CD8-positive, alpha-beta T cell (primary cell): ENCODE measurements at regions of chr3 and their contacts with region 1.

Region 1: GRCh38 chr3:160565442-160566403 is at the start of gene KPNA4:
- DNase-seq: peak; percentile 94 to 98 (median 96)
- ATAC-seq: peak; percentile 88
- H3K4me3 ChIP-seq: peak within 1 kb of the TSS; percentile 97 to 98
- H3K4me3 Mint-ChIP-seq: peak within 1 kb of the TSS; percentile 99
- H3K27ac ChIP-seq: peak within 1 kb of the TSS; percentile 81 to 93
- H3K27ac Mint-ChIP-seq: peak within 1 kb of the TSS; percentile 97
- H3K4me1 ChIP-seq: peaks cover 40% of the 10 kb centered on the region
- H3K4me1 Mint-ChIP-seq: peaks cover 52% of the 10 kb centered on the region
- H3K27me3 ChIP-seq: no peaks in the 10 kb centered on the region
- H3K27me3 Mint-ChIP-seq: no peaks in the 10 kb centered on the region
- CTCF ChIP-seq: no peak
- total RNA-seq, gene KPNA4: 64.4 to 69.2 TPM

Region 2: DNA sequence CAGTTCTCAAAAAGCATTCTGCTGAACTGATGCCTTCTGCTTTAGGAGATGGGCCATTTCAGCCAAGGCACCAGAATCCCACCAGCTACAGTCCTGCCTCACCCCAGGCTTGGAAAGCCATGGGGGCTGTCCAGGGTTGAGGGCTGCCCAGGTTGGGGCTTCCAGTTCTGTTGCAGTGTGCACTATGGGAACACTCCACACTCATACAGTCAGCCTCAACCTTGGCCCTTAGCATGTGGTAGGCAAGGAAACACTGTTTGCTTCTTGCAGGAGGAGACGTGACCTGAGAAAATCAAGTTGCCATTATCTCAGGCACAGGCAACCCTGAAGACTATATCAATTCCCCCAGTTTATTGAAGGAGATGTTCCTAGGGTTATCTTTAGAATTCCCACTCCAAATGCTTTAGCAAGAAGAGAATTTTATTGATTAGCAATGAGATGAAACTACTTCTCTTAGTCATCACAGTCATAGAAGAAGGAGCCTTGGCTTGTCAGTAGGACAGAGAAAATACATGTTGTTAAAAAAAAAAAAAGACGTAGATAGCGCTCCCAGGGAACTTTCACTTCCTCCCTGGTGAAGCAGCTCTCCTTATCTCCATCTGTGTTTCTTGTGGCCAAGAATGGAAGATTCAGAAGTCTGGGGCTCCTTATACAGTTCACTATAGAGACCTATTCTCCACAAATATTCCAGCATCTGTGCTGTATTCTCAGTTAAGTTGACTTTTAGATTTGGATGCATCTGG is 615.4 kb before region 1 on chr3:
- CTCF ChIA-PET with region 1: no interaction called
- POLR2A ChIA-PET with region 1: no interaction called
- intact Hi-C with region 1: no loop called
- DNase-seq: no peak
- ATAC-seq: no peak
- H3K4me3 ChIP-seq: no peak overlapping the region
- H3K4me3 Mint-ChIP-seq: no peak overlapping the region
- H3K27ac ChIP-seq: no peak overlapping the region
- H3K27ac Mint-ChIP-seq: no peak overlapping the region
- H3K4me1 ChIP-seq: no peaks in the 10 kb centered on the region
- H3K4me1 Mint-ChIP-seq: no peaks in the 10 kb centered on the region
- H3K27me3 ChIP-seq: no peaks in the 10 kb centered on the region
- H3K27me3 Mint-ChIP-seq: peaks cover 22% of the 10 kb centered on the region
- CTCF ChIP-seq: no peak

Region 3: DNA sequence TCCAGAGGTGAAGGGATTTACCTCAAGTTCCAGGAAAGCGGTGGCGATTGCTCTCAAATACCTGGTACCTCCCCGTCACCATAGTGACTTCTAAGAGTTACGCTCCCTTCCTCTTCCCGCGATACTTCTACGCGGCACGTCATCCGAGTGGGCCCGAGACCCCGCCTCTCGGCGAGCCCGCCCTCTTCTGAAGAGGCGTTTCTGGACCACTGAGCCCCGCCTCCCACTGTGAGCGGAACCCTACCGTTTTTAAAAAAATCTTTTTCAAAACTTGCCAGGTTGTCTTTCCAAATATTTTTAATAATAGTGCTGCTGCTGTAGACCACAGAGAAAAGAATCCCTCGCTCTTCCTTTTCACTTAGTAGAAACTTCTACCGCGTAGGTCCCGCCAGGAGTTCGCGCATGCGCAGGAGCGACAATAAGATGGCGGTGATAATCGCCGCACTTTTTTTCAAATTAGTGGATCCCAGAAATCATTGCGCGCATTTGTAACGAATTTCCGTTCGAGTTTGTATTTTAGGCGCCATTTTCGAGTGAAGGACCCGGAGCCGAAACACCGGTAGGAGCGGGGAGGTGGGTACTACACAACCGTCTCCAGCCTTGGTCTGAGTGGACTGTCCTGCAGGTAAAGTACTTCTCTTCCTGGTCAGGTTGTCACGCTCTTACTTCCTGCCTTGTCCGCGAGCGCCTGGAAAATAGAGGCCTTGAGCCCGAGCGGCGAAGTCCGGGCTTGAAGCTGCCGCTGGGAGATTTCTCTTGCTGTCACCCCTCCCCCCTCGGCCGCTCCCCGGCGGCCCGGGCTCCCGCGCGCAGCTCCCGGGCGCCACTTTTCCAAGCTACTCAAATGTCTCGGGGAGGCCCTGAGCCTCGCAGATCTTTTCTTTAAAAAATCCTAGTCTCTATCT is 166.3 kb before region 1 on chr3 and contains the starts of genes IFT80 and SMC4:
- CTCF ChIA-PET with region 1: no interaction called
- POLR2A ChIA-PET with region 1: interaction called, 3 read pairs
- intact Hi-C with region 1: loop called (anchors 1 kb)
- DNase-seq: peak; percentile 87 to 98 (median 96)
- ATAC-seq: peak; percentile 95
- H3K4me3 ChIP-seq: peak within 1 kb of the TSS; percentile 84 to 85
- H3K4me3 Mint-ChIP-seq: peak within 1 kb of the TSS; percentile 90
- H3K27ac ChIP-seq: peak within 1 kb of the TSS; percentile 85 to 92
- H3K27ac Mint-ChIP-seq: peak within 1 kb of the TSS; percentile 99
- H3K4me1 ChIP-seq: peaks cover 35% of the 10 kb centered on the region
- H3K4me1 Mint-ChIP-seq: peaks cover 56% of the 10 kb centered on the region
- H3K27me3 ChIP-seq: peaks cover 0 to 8% of the 10 kb centered on the region in 2 experiments
- H3K27me3 Mint-ChIP-seq: peaks cover 26% of the 10 kb centered on the region
- CTCF ChIP-seq: no peak
- total RNA-seq, gene IFT80: 9.9 to 12.7 TPM
- total RNA-seq, gene SMC4: 40.8 to 43.5 TPM

Region 4: GRCh38 chr3:160531311-160531710 is 34.4 kb before region 1 on chr3:
- CTCF ChIA-PET with region 1: no interaction called
- POLR2A ChIA-PET with region 1: interaction called, 5 read pairs
- intact Hi-C with region 1: loop called in 1 of 2 experiments (anchors 5 kb)
- DNase-seq: no peak
- ATAC-seq: no peak
- H3K4me3 ChIP-seq: no peak overlapping the region
- H3K4me3 Mint-ChIP-seq: no peak overlapping the region
- H3K27ac ChIP-seq: no peak overlapping the region
- H3K27ac Mint-ChIP-seq: no peak overlapping the region
- H3K4me1 ChIP-seq: no peaks in the 10 kb centered on the region
- H3K4me1 Mint-ChIP-seq: no peaks in the 10 kb centered on the region
- H3K27me3 ChIP-seq: no peaks in the 10 kb centered on the region
- H3K27me3 Mint-ChIP-seq: no peaks in the 10 kb centered on the region
- CTCF ChIP-seq: no peak

Region 5: DNA sequence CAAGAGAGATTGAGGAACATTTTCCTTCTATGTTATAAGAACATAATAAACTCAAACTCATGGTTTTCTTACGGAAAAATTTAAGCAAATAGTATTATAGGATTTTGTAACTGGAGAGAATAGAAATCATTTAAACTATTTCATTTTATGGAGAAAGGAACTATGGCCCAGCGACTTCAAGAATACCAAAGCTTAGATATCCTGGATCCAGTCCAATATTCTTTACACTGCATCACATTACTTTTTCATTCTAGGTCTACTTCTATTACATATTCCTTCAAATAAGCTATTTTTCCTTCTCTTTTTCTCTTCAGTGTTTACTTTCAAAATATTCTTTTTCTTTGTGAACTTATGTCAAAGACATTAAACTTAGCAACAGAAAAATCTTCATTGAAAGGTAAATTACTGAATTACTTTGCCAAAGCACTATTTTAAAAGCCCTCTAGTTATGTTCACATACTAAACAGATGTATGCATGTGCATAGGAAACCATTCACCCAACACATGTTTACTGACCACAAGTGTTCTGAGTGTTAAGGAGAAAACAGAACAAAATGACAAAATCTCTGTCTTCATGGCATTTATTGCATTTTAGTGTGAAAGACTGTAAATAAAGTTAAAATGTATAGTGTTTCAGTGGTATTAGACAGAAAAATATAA is 20.7 kb before region 1 on chr3:
- CTCF ChIA-PET with region 1: no interaction called
- POLR2A ChIA-PET with region 1: interaction called, 3 read pairs
- intact Hi-C with region 1: loop called in 1 of 2 experiments (anchors 2 kb)
- DNase-seq: no peak
- ATAC-seq: no peak
- H3K4me3 ChIP-seq: no peak overlapping the region
- H3K4me3 Mint-ChIP-seq: peak overlapping the region; percentile 16
- H3K27ac ChIP-seq: no peak overlapping the region
- H3K27ac Mint-ChIP-seq: peak overlapping the region; percentile 52
- H3K4me1 ChIP-seq: peaks cover 22% of the 10 kb centered on the region
- H3K4me1 Mint-ChIP-seq: peaks cover 86% of the 10 kb centered on the region
- H3K27me3 ChIP-seq: no peaks in the 10 kb centered on the region
- H3K27me3 Mint-ChIP-seq: no peaks in the 10 kb centered on the region
- CTCF ChIP-seq: no peak

Region 6: DNA sequence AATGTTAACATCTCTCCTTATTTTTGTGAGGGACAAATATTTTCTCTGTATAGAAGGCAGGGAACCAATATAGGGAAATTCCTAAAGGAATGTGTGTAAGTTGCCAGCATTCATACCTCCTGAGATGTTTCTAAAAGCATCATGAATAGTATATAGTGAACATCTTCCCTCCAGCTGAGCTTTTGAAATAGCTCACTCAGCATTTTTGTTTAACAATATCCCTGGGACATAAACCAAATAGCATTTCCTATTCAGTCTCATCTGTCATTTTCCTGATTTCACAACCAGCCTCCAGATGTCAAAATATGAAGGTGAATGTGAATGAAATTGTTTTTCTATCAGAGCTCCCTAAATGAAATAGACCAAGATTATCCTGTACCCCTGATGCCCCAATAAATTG is 327.5 kb after region 1 on chr3:
- CTCF ChIA-PET with region 1: no interaction called
- POLR2A ChIA-PET with region 1: no interaction called
- intact Hi-C with region 1: no loop called
- DNase-seq: no peak
- ATAC-seq: no peak
- H3K4me3 ChIP-seq: no peak overlapping the region
- H3K4me3 Mint-ChIP-seq: no peak overlapping the region
- H3K27ac ChIP-seq: no peak overlapping the region
- H3K27ac Mint-ChIP-seq: no peak overlapping the region
- H3K4me1 ChIP-seq: no peaks in the 10 kb centered on the region
- H3K4me1 Mint-ChIP-seq: no peaks in the 10 kb centered on the region
- H3K27me3 ChIP-seq: no peaks in the 10 kb centered on the region
- H3K27me3 Mint-ChIP-seq: no peaks in the 10 kb centered on the region
- CTCF ChIP-seq: no peak

Region 7: GRCh38 chr3:161220850-161221753 is 655.4 kb after region 1 on chr3 and contains the start of gene NMD3:
- CTCF ChIA-PET with region 1: no interaction called
- POLR2A ChIA-PET with region 1: no interaction called
- intact Hi-C with region 1: loop called (anchors 2 to 5 kb)
- DNase-seq: peak; percentile 84 to 94 (median 92)
- ATAC-seq: peak; percentile 97
- H3K4me3 ChIP-seq: peak within 1 kb of the TSS; percentile 85 to 95
- H3K4me3 Mint-ChIP-seq: peak within 1 kb of the TSS; percentile 87
- H3K27ac ChIP-seq: peak within 1 kb of the TSS; percentile 78 to 95
- H3K27ac Mint-ChIP-seq: peak within 1 kb of the TSS; percentile 95
- H3K4me1 ChIP-seq: peaks cover 25% of the 10 kb centered on the region
- H3K4me1 Mint-ChIP-seq: peaks cover 38% of the 10 kb centered on the region
- H3K27me3 ChIP-seq: no peaks in the 10 kb centered on the region
- H3K27me3 Mint-ChIP-seq: peaks cover 3% of the 10 kb centered on the region
- CTCF ChIP-seq: no peak
- total RNA-seq, gene NMD3: 53.2 to 54.6 TPM